Heart left ventricle (tissue), 16 donors: ENCODE measurements at regions of chr7 and their contacts with region 1.

Region 1: GRCh38 chr7:3825491-3825890 is 524.4 kb downstream of the SDK1 start:
- DNase-seq: no peak
- ATAC-seq: no peak
- H3K4me3 ChIP-seq: no peak overlapping the region
- H3K27ac ChIP-seq: no peak overlapping the region
- H3K4me1 ChIP-seq: no peaks in the 10 kb centered on the region
- H3K27me3 ChIP-seq: no peaks in the 10 kb centered on the region
- CTCF ChIP-seq: no peak
- POLR2A ChIP-seq: no peak

Region 2: DNA sequence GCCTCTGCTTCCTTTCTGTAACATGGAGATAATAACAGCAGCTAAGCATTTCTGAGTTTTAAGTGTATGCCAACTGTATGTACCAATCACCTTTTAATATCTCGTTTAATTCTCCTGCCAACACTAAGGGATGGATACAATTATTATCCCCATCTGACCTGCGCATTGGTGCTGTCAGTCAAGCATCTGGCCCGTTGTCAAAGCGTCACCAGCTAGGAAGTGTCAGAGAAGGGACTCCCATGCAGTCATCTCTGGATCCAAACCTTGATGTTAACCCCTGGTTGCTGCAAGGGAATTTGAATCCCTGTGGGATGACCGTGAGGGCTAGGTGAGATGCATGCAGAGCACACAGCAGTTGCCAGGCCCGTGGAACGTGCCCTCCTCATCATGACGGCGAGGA is 17.7 kb before region 1 on chr7:
- intact Hi-C with region 1: no loop called
- DNase-seq: no peak
- ATAC-seq: no peak
- H3K4me3 ChIP-seq: no peak overlapping the region
- H3K27ac ChIP-seq: no peak overlapping the region
- H3K4me1 ChIP-seq: no peaks in the 10 kb centered on the region
- H3K27me3 ChIP-seq: no peaks in the 10 kb centered on the region
- CTCF ChIP-seq: no peak
- POLR2A ChIP-seq: no peak

Region 3: DNA sequence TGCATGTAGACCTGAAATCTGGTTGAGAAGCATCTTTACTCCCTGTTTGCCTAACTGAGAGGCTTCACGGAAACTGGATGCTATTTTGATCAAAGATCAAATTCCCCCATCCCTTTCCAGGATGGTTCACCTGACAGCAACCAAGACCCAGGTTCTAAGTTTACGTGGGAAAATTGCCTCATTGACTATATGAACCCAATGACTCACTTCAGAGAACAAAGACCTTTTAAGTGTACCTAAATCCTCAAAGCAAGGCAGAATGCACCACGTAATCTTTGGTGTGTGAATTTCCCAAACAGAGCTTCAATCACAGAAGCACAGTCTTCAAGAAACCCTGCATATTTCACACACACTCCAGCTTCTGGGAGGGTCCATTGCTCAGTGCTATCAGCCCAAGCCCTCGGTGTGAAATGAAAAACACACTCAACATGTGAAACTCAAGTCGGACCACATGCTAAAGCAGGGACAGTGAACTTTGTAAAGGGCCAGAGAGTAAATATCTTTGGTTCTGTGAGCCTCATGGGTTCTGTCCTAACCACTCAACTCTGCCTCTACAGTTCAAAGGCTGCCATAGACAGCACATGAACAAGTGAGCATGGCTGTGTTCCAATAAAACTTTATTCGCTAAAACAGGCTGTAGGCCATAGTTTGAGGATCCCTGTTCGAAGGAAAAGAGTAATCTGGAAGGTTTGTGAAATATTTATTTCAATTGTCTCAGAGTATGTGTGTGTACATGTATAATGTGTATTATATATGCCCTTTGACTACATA is 581.0 kb after region 1 on chr7:
- intact Hi-C with region 1: loop called in 1 of 10 experiments (anchors 5 kb)
- DNase-seq: no peak
- ATAC-seq: no peak
- H3K4me3 ChIP-seq: no peak overlapping the region
- H3K27ac ChIP-seq: no peak overlapping the region
- H3K4me1 ChIP-seq: no peaks in the 10 kb centered on the region
- H3K27me3 ChIP-seq: no peaks in the 10 kb centered on the region
- CTCF ChIP-seq: no peak
- POLR2A ChIP-seq: no peak

Region 4: GRCh38 chr7:4460597-4461137 is 635.2 kb after region 1 on chr7:
- intact Hi-C with region 1: no loop called
- DNase-seq: no peak
- ATAC-seq: no peak
- H3K4me3 ChIP-seq: no peak overlapping the region
- H3K27ac ChIP-seq: no peak overlapping the region
- H3K4me1 ChIP-seq: peaks cover 0 to 6% (median 0%) of the 10 kb centered on the region in 12 donors
- H3K27me3 ChIP-seq: peaks cover 0 to 5% (median 0%) of the 10 kb centered on the region in 9 donors
- CTCF ChIP-seq: no peak
- POLR2A ChIP-seq: no peak